ENCODE measurements at regions of chr6 and their contacts with region 1.

Region 1: GRCh38 chr6:25490018-25490801 is 161.8 kb upstream of the SCGN start:
- DNase-seq: peak; percentile 59
- H3K4me3 Mint-ChIP-seq: no peak overlapping the region
- H3K27ac Mint-ChIP-seq: peak overlapping the region; percentile 0
- H3K4me1 Mint-ChIP-seq: peaks cover 7% of the 10 kb centered on the region
- H3K27me3 Mint-ChIP-seq: no peaks in the 10 kb centered on the region

Region 2: GRCh38 chr6:25223490-25223991 is 266.7 kb before region 1 on chr6:
- intact Hi-C with region 1: loop called (anchors 1 kb)
- DNase-seq: peak; percentile 24
- H3K4me3 Mint-ChIP-seq: peak overlapping the region; percentile 79
- H3K27ac Mint-ChIP-seq: no peak overlapping the region
- H3K4me1 Mint-ChIP-seq: peaks cover 14% of the 10 kb centered on the region
- H3K27me3 Mint-ChIP-seq: no peaks in the 10 kb centered on the region

Region 3: GRCh38 chr6:25278914-25279747 is 211.1 kb before region 1 on chr6 and contains the start of gene CARMIL1:
- intact Hi-C with region 1: loop called (anchors 1 kb)
- DNase-seq: peak; percentile 67
- H3K4me3 Mint-ChIP-seq: peak within 1 kb of the TSS; percentile 88
- H3K27ac Mint-ChIP-seq: peak within 1 kb of the TSS; percentile 79
- H3K4me1 Mint-ChIP-seq: peaks cover 30% of the 10 kb centered on the region
- H3K27me3 Mint-ChIP-seq: peaks cover 12% of the 10 kb centered on the region
- total RNA-seq, gene CARMIL1: 1.7 and 1.9 TPM in 2 replicates

Region 4: DNA sequence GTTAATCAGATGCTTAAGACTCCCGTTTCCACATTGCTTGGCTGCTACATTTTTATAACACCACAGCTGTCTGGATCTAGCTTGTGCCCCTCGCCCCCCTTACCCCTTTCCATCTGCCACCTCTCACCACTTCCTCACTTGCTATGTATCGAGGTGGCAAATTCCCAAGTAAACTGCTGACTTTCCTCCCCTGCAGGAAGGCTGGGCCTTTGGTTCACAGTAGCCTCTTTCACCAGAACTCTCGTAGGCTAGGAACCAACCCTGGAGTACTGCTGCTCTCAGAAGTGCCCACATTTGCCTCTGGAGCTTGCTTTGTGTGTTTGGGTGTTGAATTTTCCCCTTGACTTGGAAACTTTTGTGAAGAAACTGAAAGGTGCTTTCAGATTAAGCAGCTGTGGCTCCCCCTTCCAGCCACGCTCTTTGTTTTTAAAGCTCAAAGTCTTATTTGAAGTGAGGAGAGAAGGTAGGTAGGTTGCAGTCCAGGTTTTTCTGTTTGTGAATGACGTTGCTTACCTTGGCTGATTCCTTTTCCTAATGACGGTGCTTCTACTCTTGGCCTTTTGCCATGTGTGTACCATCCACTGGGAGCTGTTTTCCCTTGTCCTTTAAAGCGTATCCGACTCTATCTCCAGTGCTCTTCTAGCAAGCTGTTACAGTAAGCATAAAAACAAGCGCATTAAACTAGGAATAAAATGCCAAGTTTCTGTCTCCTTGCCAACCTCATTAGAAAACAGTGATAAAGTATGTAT is 120.6 kb before region 1 on chr6:
- intact Hi-C with region 1: loop called (anchors 1 kb)
- DNase-seq: peak; percentile 7
- H3K4me3 Mint-ChIP-seq: peak overlapping the region; percentile 62
- H3K27ac Mint-ChIP-seq: peak overlapping the region; percentile 91
- H3K4me1 Mint-ChIP-seq: peaks cover 73% of the 10 kb centered on the region
- H3K27me3 Mint-ChIP-seq: no peaks in the 10 kb centered on the region

Region 5: GRCh38 chr6:25601800-25602673 is 111.8 kb after region 1 on chr6:
- intact Hi-C with region 1: loop called (anchors 1 kb)
- DNase-seq: no peak
- H3K4me3 Mint-ChIP-seq: no peak overlapping the region
- H3K27ac Mint-ChIP-seq: no peak overlapping the region
- H3K4me1 Mint-ChIP-seq: no peaks in the 10 kb centered on the region
- H3K27me3 Mint-ChIP-seq: no peaks in the 10 kb centered on the region

Region 6: GRCh38 chr6:26105842-26106241 is 615.6 kb after region 1 on chr6:
- intact Hi-C with region 1: no loop called
- DNase-seq: no peak
- H3K4me3 Mint-ChIP-seq: no peak overlapping the region
- H3K27ac Mint-ChIP-seq: no peak overlapping the region
- H3K4me1 Mint-ChIP-seq: peaks cover 30% of the 10 kb centered on the region
- H3K27me3 Mint-ChIP-seq: peaks cover 2% of the 10 kb centered on the region